Activated CD4-positive, alpha-beta T cell treated with anti-CD3 and anti-CD28 coated beads, Interleukin-2, amount 10 ng/mL, durations not matched to agents 24 days and 14 days (primary cell): ENCODE measurements at regions of chr22 and their contacts with region 1.

Region 1: DNA sequence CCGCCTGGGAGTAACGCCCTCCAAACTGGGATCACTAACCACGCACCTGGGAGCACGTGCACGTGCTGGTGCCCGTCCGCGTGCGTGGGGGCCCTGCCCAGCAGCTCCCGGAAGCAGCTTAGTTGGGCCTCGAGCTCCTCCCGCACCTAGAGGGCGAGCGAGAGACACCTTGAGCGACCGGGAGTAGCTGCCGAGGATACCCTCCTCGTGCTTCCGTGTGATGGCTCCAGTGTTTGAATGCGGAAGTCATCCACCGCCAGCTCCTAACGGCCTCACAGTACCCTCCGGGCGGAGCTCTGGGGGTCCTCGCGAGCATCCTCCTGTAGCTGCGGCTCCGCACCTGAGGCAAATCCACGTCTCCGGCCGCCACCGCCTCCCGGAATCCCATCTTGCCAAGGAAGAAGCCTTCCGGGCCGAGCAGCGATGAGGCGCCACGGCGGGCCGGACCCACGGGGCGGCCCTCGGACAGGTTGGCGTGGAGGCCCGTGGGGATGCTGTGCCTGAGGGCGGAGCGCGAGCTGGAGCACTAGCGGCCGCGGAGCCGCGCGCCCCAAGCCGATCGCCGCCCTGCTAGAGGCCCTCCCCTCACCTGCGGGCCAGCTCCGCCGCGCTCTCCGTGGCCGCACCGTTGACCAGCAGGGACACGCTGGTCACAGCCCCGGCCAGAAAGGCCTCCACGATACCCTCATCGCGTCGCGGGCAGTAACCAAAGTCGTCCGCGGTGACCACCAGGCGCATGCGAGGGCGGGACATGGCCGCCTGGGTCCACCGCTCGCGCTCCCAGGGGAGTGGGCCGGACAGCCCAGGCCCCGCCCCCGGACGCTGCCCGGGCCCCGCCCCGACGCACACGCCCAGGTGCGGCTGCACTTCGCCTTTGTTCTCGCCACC is at the start of gene YDJC:
- DNase-seq: peak; percentile 99
- H3K4me3 Mint-ChIP-seq: peak within 1 kb of the TSS; percentile 90
- H3K27ac Mint-ChIP-seq: peak within 1 kb of the TSS; percentile 94
- H3K4me1 Mint-ChIP-seq: peaks cover 39% of the 10 kb centered on the region
- H3K27me3 Mint-ChIP-seq: no peaks in the 10 kb centered on the region
- total RNA-seq, gene YDJC: 54.2 and 56.1 TPM in 2 replicates

Region 2: DNA sequence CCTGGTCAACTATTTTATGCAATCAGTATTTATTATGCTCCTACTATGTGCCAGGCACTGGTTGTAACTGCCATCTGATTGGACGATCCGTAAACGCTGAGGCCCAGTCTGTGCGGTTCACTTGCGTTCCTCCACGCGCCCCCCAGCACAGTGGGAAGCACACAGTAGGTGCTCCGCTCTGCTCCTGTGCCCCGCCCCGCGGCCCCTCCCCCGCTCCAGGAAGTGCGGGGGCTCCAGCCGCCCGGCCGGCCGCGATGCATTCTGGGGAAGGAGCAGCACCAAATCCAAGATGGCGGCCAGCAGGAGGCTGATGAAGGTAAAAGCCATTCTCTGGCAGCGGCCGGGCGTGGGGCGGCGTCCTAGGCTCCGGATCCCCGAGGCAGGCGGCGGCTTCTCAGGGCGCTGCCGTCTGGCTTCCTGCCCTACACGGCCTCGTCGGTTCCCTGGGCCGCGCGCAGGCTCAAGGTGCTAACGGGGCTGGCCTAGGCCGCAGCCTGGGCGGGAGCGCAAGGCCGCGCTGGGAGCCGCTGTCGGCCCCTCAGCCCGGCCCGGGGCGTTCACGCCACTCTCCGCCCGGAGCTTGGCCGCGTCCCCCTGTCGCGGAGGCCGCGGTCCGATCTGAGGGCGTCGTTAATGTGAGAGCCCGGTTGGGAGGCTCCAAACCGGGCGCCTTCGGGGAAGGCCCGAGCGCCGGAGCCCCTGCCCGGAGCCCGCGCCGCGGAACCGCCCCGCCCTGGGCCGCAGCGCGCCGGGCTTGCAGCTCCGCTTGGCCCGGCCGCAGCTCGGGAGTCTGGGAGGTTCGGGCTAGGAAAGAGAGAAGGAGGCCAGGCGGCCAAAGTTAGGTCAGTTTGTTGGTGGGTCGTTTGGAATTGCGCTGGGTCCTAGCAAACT is 61.8 kb before region 1 on chr22 and contains the start of gene UBE2L3:
- intact Hi-C with region 1: no loop called
- DNase-seq: peak; percentile 95
- H3K4me3 Mint-ChIP-seq: peak within 1 kb of the TSS; percentile 90
- H3K27ac Mint-ChIP-seq: peak within 1 kb of the TSS; percentile 90
- H3K4me1 Mint-ChIP-seq: peaks cover 30% of the 10 kb centered on the region
- H3K27me3 Mint-ChIP-seq: no peaks in the 10 kb centered on the region
- total RNA-seq, gene UBE2L3: 62.1 and 63.3 TPM in 2 replicates

Region 3: GRCh38 chr22:21641789-21642583 is 12.5 kb after region 1 on chr22 and contains the start of gene SDF2L1:
- intact Hi-C with region 1: loop called (anchors 1 kb)
- DNase-seq: peak; percentile 100
- H3K4me3 Mint-ChIP-seq: peak within 1 kb of the TSS; percentile 90
- H3K27ac Mint-ChIP-seq: peak within 1 kb of the TSS; percentile 93
- H3K4me1 Mint-ChIP-seq: peaks cover 33% of the 10 kb centered on the region
- H3K27me3 Mint-ChIP-seq: peaks cover 1% of the 10 kb centered on the region
- total RNA-seq, gene SDF2L1: 94.3 and 103 TPM in 2 replicates

Region 4: DNA sequence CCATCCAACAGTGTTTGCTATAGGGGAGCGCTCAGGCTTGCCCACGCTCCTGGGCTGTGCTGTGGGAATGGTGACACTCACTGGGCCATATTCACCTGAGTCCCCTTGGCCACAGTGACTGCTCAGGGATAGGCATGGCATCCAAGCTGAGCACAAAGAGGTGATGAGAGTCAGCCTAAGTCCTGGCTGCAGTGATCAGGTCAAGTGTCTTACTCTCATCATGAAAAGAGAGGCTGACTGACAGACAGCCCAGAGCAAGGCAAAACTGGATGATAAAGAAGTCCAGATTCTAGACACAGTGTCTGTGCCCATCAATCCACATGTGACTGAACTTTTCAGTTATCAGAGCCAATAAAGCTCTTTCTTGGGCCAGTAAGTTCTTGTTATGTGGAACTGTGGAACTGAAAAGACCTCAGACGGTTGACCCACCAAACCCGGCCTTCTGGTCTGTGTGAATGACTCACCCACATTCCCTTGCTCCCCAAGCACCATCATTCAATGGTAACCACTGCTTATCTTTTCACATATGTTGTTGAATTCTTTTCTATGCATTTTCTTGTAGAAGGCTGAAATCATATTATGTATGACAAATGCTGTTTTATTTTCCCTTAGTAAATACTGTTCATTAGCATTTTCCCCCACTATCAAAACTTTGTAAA is 149.3 kb after region 1 on chr22:
- intact Hi-C with region 1: no loop called
- DNase-seq: no peak
- H3K4me3 Mint-ChIP-seq: no peak overlapping the region
- H3K27ac Mint-ChIP-seq: no peak overlapping the region
- H3K4me1 Mint-ChIP-seq: peaks cover 5% of the 10 kb centered on the region
- H3K27me3 Mint-ChIP-seq: no peaks in the 10 kb centered on the region